Dendritic cell treated with granulocyte-macrophage colony-stimulating factor and Interleukin-4, amounts not matched to agents 40 ng/mL and 50 ng/mL, for 4 days (primary cell): ENCODE measurements at regions of chr10 and their contacts with region 1.

Region 1: GRCh38 chr10:128011175-128011979 is 104.5 kb downstream of the PTPRE start:
- H3K4me3 Mint-ChIP-seq: peak overlapping the region; percentile 58
- H3K27ac Mint-ChIP-seq: peak overlapping the region; percentile 26
- H3K4me1 Mint-ChIP-seq: peaks cover 20% of the 10 kb centered on the region
- H3K27me3 Mint-ChIP-seq: no peaks in the 10 kb centered on the region

Region 2: DNA sequence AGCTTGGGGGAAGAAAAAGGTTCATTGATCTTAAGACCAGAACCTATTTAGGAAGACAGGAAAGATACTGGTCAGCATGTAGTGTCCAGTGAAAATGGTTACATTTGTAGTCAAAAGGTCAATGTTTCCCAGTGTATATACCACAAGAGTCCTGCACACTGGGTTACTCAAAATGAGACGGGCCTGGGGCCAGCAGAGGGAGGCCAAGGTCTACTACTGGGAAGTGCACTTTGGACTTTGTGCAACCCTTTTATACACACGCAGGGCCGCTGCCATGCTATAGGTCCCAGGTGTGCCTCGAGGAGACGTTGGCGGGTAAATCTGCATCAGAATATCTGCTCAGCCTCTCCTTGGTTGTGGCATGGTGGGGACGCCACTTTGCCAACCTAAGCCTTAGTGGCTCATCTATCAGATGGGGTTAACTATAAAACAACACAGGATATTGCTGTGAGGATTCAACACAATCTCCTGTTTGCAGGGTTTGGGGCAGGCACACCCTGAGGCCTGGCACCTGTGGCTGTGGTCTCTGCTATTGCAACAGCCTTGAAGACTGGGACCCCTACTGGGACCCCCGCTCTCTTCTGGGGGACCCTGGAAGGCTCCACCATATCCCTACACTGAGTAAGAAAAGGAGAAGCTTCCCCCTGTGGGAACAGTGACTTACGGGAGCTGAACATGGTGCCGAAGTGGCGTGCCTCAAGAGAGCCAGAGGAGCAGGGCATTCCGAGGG is 138.3 kb before region 1 on chr10:
- intact Hi-C with region 1: loop called (anchors 10 kb)
- H3K4me3 Mint-ChIP-seq: no peak overlapping the region
- H3K27ac Mint-ChIP-seq: no peak overlapping the region
- H3K4me1 Mint-ChIP-seq: peaks cover 42% of the 10 kb centered on the region
- H3K27me3 Mint-ChIP-seq: peaks cover 3% of the 10 kb centered on the region